Common myeloid progenitor, CD34-positive (primary cell): ENCODE measurements at regions of chr11 and their contacts with region 1.

Region 1: GRCh38 chr11:122668562-122669090 is 13.1 kb downstream of the UBASH3B start:
- DNase-seq: peak in 2 of 3 donors; percentile 84 to 89
- H3K4me3 ChIP-seq: peak overlapping the region in 1 of 7 experiments; percentile 11
- H3K27ac ChIP-seq: no peak overlapping the region
- H3K4me1 ChIP-seq: peaks cover 16 to 77% (median 51%) of the 10 kb centered on the region in 4 experiments
- H3K27me3 ChIP-seq: no peaks in the 10 kb centered on the region

Region 2: GRCh38 chr11:122655527-122656072 is 13.0 kb before region 1 on chr11 and contains the start of gene UBASH3B:
- CTCF ChIA-PET with region 1: interaction called, 83 read pairs
- POLR2A ChIA-PET with region 1: interaction called, 8 read pairs
- DNase-seq: peak; percentile 66 to 83 (median 70)
- H3K4me3 ChIP-seq: peak within 1 kb of the TSS; percentile 75 to 94 (median 84)
- H3K27ac ChIP-seq: peak within 1 kb of the TSS in 1 of 2 experiments; percentile 57
- H3K4me1 ChIP-seq: peaks cover 11 to 48% (median 37%) of the 10 kb centered on the region in 4 experiments
- H3K27me3 ChIP-seq: no peaks in the 10 kb centered on the region